ENCODE measurements at regions of chr18 and their contacts with region 1.

Region 1: DNA sequence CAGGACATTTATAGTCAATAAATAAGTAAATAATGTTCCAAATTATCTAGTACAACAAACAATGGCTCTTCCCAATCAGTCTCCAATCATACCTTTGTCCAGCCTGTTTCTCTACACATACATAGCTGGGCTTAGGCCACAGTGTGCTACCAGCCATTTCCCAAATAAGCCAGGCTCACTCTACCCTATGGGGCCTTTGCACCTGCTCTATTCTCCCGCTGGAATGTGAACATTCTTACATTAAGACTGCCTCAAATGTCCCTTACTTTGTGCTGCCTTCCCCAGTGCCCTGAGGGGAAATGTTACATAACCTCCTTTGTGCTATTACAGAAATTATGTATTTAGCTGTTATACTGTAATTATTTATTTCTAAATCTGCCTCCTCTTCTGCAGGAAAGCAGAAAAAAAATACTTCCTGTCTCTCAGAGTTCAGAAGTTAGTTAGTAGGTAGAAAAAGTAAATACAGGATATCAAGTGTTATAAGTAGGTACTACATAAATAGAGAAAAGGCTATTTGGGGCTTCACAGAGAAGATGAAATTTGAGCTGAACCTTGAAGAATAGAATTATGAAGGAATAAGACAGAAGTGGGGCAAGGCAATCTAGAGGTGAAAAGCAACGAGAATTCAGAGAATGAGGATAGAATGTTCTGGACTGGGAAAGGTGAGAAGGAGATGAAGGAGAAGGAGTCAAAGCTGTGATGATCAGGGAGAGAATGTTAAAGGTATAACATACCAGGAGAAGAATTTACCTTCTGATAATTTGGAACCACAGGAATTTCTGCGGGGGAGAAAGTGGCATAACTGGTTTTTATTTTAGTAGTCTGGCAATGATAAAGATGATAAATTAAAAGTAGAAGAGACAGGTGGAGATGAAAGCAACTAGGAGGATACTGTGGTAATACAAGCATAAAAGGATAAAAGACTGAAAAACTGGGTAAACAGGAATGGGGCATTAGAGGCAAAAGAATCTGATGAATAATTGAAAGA is 37.0 kb downstream of the ROCK1 start:
- DNase-seq: peak in 3 of 9 donors; percentile 4 to 15 (median 9)
- ATAC-seq: peak; percentile 31
- H3K4me3 ChIP-seq: no peak overlapping the region
- H3K4me3 Mint-ChIP-seq: peak overlapping the region; percentile 15 to 84 (median 71)
- H3K27ac ChIP-seq: no peak overlapping the region
- H3K27ac Mint-ChIP-seq: peak overlapping the region in 8 of 9 donors; percentile 28 to 83 (median 61)
- H3K4me1 ChIP-seq: peaks cover 21 to 35% of the 10 kb centered on the region in 2 donors
- H3K4me1 Mint-ChIP-seq: peaks cover 31 to 89% (median 81%) of the 10 kb centered on the region in 7 donors
- H3K27me3 ChIP-seq: no peaks in the 10 kb centered on the region
- H3K27me3 Mint-ChIP-seq: no peaks in the 10 kb centered on the region

Region 2: DNA sequence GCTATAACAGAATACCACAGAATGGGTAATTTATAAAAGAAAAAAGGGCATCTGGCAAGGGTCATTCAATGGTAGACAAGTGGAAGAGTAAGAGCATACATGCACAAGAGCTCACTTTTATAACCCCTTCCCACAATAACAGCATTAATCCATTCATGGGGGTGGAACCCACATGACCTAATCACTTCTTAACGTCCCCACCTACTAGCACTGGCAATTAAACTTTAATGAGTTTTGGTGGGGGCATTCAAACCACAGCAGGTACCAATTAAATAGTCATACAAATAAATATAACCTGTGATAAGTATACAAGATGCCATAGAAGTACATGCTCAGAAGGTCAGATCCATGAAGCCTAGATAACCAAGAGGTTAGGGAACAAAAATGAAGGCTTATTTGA is 11.6 kb before region 1 on chr18:
- CTCF ChIA-PET with region 1: no interaction called
- POLR2A ChIA-PET with region 1: interaction called, 3 read pairs
- intact Hi-C with region 1: loop called in 1 of 2 experiments (anchors 2 kb)
- DNase-seq: no peak
- ATAC-seq: no peak
- H3K4me3 ChIP-seq: no peak overlapping the region
- H3K4me3 Mint-ChIP-seq: no peak overlapping the region
- H3K27ac ChIP-seq: no peak overlapping the region
- H3K27ac Mint-ChIP-seq: peak overlapping the region in 2 of 9 donors; percentile 6 to 45
- H3K4me1 ChIP-seq: no peaks in the 10 kb centered on the region
- H3K4me1 Mint-ChIP-seq: peaks cover 10 to 55% (median 42%) of the 10 kb centered on the region in 7 donors
- H3K27me3 ChIP-seq: no peaks in the 10 kb centered on the region
- H3K27me3 Mint-ChIP-seq: no peaks in the 10 kb centered on the region

Region 3: DNA sequence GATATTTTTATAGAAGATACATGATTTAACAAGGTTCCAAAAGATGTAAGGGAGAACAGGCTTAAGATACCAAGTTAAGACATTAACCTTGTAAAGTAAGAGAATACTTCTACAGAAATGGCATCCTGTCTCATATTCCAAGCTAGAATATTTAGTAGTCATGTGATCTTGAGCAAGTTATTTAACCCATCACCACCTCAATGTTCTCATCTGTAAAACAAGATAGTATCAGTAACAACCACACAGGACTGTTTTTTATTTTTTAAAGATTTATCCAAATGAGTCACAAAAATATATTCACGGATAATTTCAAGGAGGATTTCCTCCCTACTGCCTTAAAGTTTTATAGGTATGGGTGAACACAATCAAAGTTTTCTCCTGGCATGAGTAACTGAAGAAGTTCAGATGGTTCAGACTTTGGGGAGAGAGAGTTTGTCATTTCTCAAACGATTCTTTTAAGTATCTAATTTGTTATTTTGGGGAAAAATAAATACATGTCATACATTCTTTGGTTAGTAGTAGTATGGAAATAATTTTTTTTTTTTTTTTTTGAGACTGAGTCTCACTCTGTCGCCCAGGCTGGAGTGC is 11.0 kb after region 1 on chr18:
- CTCF ChIA-PET with region 1: no interaction called
- POLR2A ChIA-PET with region 1: no interaction called
- intact Hi-C with region 1: loop called in 1 of 2 experiments (anchors 1 kb)
- DNase-seq: no peak
- ATAC-seq: no peak
- H3K4me3 ChIP-seq: no peak overlapping the region
- H3K4me3 Mint-ChIP-seq: peak overlapping the region in 6 of 10 donors; percentile 15 to 63 (median 46)
- H3K27ac ChIP-seq: no peak overlapping the region
- H3K27ac Mint-ChIP-seq: peak overlapping the region in 1 of 9 donors; percentile 41
- H3K4me1 ChIP-seq: peaks cover 5 to 19% of the 10 kb centered on the region in 2 donors
- H3K4me1 Mint-ChIP-seq: peaks cover 41 to 88% (median 78%) of the 10 kb centered on the region in 7 donors
- H3K27me3 ChIP-seq: no peaks in the 10 kb centered on the region
- H3K27me3 Mint-ChIP-seq: no peaks in the 10 kb centered on the region

Region 4: DNA sequence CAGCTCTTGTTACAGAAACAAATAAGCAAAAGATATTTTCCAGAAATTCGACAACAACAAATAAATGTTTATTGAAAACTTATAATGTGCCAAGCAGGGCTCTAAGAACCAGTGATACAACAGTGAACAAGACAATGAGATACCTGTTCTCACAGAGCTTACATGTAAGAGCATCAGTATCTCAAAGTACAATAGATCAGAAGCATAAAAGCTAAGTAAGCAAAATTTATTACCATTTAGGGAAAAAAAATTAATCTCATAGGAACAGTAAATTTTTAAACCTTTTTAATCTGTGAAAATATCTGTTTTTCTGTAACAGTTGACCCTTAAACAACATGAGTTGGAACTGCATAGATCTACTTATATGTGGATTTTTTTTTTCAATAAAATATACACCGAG is 16.1 kb after region 1 on chr18:
- CTCF ChIA-PET with region 1: no interaction called
- POLR2A ChIA-PET with region 1: no interaction called
- intact Hi-C with region 1: loop called in 1 of 2 experiments (anchors 2 kb)
- DNase-seq: no peak
- ATAC-seq: no peak
- H3K4me3 ChIP-seq: no peak overlapping the region
- H3K4me3 Mint-ChIP-seq: peak overlapping the region in 4 of 10 donors; percentile 17 to 45 (median 32)
- H3K27ac ChIP-seq: no peak overlapping the region
- H3K27ac Mint-ChIP-seq: peak overlapping the region in 1 of 9 donors; percentile 34
- H3K4me1 ChIP-seq: peaks cover 5 to 8% of the 10 kb centered on the region in 2 donors
- H3K4me1 Mint-ChIP-seq: peaks cover 14 to 84% (median 71%) of the 10 kb centered on the region in 7 donors
- H3K27me3 ChIP-seq: no peaks in the 10 kb centered on the region
- H3K27me3 Mint-ChIP-seq: no peaks in the 10 kb centered on the region